Calu3 (cell line): ENCODE measurements at regions of chr1 and their contacts with region 1.

Region 1: GRCh38 chr1:199780948-199781347 is 246.6 kb upstream of the NR5A2 start:
- DNase-seq: no peak
- H3K4me3 Mint-ChIP-seq: no peak overlapping the region
- H3K27ac Mint-ChIP-seq: peak overlapping the region; percentile 54
- H3K4me1 Mint-ChIP-seq: peaks cover 19% of the 10 kb centered on the region
- H3K27me3 Mint-ChIP-seq: no peaks in the 10 kb centered on the region
- CTCF ChIP-seq: no peak

Region 2: DNA sequence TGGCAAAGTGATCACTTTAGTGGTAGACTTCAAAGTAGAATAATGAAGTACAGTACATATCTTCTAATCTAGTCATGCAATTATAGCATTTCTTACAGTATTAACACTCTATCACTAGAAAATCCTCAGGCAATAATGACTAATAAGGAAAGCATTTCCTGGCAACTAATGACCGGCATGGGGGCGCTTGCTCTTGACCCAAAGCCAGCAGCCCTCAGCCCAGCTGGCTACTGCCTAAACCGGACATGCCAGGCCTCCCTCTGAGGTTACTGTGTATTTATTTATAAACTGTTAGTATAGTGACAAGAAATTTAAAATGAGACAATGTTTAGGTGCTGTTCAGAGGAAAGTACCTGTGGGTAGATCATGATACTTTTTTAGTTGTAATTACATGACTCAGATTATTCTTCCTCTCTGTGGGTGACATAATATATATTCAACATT is 508.3 kb before region 1 on chr1:
- CTCF ChIA-PET with region 1: no interaction called
- intact Hi-C with region 1: no loop called
- DNase-seq: peak; percentile 86
- H3K4me3 Mint-ChIP-seq: no peak overlapping the region
- H3K27ac Mint-ChIP-seq: peak overlapping the region; percentile 62
- H3K4me1 Mint-ChIP-seq: peaks cover 40% of the 10 kb centered on the region
- H3K27me3 Mint-ChIP-seq: no peaks in the 10 kb centered on the region
- CTCF ChIP-seq: no peak

Region 3: DNA sequence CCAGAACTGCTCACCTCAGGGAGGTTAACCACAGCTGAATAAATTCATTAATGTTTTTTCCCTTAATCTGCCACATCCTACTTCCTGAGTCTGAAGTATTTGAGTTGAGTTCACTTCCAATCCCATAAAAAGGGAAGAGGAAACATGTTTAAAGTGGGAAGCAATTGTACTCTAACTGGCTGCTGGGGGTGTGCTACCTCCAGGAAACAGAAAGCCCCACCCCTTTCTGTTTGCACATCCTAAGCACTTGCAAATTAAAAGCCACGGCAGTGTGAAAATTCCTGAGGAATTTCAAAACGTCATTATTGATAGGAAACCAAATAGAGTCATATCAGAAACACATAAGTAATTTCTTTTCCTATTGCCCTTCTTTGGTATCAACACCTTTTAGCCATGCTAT is 60.5 kb before region 1 on chr1:
- CTCF ChIA-PET with region 1: no interaction called
- intact Hi-C with region 1: loop called (anchors 2 kb)
- DNase-seq: no peak
- H3K4me3 Mint-ChIP-seq: no peak overlapping the region
- H3K27ac Mint-ChIP-seq: no peak overlapping the region
- H3K4me1 Mint-ChIP-seq: peaks cover 17% of the 10 kb centered on the region
- H3K27me3 Mint-ChIP-seq: no peaks in the 10 kb centered on the region
- CTCF ChIP-seq: no peak

Region 4: GRCh38 chr1:200015811-200016210 is 234.9 kb after region 1 on chr1:
- CTCF ChIA-PET with region 1: no interaction called
- intact Hi-C with region 1: loop called (anchors 5 kb)
- DNase-seq: no peak
- H3K4me3 Mint-ChIP-seq: no peak overlapping the region
- H3K27ac Mint-ChIP-seq: no peak overlapping the region
- H3K4me1 Mint-ChIP-seq: peaks cover 7% of the 10 kb centered on the region
- H3K27me3 Mint-ChIP-seq: no peaks in the 10 kb centered on the region
- CTCF ChIP-seq: no peak